ENCODE measurements at regions of chr2 and their contacts with region 1.

Region 1: GRCh38 chr2:59803586-59803985 is 749.9 kb downstream of the BCL11A start:
- DNase-seq: no peak
- H3K4me3 Mint-ChIP-seq: no peak overlapping the region
- H3K27ac Mint-ChIP-seq: no peak overlapping the region
- H3K4me1 Mint-ChIP-seq: no peaks in the 10 kb centered on the region
- H3K27me3 Mint-ChIP-seq: no peaks in the 10 kb centered on the region

Region 2: DNA sequence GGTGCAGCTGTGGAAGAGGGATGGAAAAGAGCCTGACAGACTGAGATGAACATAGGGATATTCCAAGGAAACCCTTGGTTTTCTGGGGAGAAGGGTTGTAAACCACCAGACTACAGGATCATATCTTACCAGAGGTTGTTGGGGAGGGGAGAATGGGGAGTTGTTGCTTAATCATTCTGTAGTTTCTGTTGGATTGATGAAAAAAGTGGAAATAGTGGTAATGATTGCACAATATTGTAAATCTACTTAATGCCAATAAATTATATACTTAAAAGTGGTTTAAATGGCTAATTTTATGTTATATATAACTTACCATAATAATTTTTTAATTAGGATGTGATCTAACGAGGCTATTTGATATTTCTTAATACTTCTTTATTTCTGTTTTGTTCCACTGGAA is 51.1 kb before region 1 on chr2:
- CTCF ChIA-PET with region 1: no interaction called
- intact Hi-C with region 1: loop called (anchors 2 kb)
- DNase-seq: no peak
- H3K4me3 Mint-ChIP-seq: no peak overlapping the region
- H3K27ac Mint-ChIP-seq: no peak overlapping the region
- H3K4me1 Mint-ChIP-seq: no peaks in the 10 kb centered on the region
- H3K27me3 Mint-ChIP-seq: no peaks in the 10 kb centered on the region

Region 3: DNA sequence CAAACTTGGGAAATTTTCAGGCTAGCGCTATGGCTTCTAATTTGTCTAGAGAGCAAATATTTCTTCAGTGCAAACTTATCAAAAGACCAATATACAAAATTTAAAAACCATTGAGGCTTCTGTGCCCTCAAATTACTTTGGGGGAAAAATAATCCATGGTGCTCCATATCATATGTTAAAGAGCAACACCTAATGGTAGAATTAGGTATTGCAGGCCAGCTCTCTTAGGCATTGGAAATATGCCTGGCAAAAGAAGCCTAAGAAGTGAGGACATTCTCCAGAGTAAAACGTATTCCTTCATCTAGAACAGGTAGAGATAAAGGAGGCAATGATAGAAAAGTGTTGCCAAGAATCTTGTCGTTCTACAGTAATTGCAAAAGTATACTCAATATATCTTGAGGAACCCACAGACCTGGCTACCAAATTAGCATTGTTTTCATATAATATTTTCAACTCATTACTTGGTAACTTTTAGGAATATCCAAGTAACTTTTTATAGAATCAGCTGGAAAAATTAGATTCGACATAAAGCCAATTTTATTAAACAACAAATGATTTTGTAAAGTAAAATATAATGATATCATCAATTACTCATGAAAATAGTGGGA is 348.7 kb after region 1 on chr2:
- CTCF ChIA-PET with region 1: no interaction called
- intact Hi-C with region 1: no loop called
- DNase-seq: no peak
- H3K4me3 Mint-ChIP-seq: no peak overlapping the region
- H3K27ac Mint-ChIP-seq: no peak overlapping the region
- H3K4me1 Mint-ChIP-seq: no peaks in the 10 kb centered on the region
- H3K27me3 Mint-ChIP-seq: no peaks in the 10 kb centered on the region